ENCODE measurements at regions of chr7 and their contacts with region 1.

Region 1: DNA sequence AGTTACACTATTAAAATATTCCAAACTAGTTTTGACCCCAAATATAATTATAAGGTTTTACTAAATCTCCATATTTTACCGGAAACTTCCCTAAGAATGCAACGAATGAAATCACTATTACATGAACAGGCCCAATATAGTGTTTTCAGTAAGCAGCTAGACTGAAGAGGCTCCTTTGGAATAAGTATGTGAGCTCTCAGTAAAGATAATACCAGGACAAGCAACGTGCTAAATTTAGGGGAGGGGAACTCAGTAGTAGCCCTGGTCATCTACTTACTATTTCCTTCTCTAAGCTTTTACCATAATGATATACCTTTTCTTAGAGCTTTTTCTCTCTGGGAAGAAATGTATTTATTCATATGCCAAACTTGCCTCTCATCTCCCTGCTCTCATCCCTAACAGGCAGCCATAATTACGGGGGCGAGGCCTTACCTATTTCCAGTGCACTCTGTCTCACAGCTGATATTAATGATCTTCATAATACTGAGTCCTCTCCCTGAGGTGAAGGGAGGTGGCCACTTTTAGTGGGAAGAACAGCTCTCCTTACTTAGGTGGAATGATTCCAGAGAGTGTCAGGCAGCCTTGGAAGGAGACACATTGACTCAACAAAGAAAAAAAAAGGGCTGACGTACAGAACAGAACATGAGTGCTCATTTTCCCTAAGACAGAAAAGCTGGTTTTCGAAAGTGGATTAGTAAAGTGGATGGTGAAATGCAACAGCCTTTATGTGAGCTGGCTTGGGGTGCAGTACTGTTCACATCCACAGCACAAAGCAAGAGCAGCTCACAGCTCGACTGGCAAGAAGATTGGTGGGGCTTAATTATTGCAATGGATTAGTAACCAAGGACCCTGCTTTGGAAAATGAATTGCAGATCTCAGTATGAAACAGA is 165.4 kb downstream of the GLI3 start:
- DNase-seq: peak; percentile 68
- H3K4me3 ChIP-seq: no peak overlapping the region
- H3K27ac ChIP-seq: no peak overlapping the region
- H3K4me1 ChIP-seq: peaks cover 47% of the 10 kb centered on the region
- H3K27me3 ChIP-seq: no peaks in the 10 kb centered on the region
- CTCF ChIP-seq: peak; percentile 43; the same call in 1 of the 2 replicates

Region 2: DNA sequence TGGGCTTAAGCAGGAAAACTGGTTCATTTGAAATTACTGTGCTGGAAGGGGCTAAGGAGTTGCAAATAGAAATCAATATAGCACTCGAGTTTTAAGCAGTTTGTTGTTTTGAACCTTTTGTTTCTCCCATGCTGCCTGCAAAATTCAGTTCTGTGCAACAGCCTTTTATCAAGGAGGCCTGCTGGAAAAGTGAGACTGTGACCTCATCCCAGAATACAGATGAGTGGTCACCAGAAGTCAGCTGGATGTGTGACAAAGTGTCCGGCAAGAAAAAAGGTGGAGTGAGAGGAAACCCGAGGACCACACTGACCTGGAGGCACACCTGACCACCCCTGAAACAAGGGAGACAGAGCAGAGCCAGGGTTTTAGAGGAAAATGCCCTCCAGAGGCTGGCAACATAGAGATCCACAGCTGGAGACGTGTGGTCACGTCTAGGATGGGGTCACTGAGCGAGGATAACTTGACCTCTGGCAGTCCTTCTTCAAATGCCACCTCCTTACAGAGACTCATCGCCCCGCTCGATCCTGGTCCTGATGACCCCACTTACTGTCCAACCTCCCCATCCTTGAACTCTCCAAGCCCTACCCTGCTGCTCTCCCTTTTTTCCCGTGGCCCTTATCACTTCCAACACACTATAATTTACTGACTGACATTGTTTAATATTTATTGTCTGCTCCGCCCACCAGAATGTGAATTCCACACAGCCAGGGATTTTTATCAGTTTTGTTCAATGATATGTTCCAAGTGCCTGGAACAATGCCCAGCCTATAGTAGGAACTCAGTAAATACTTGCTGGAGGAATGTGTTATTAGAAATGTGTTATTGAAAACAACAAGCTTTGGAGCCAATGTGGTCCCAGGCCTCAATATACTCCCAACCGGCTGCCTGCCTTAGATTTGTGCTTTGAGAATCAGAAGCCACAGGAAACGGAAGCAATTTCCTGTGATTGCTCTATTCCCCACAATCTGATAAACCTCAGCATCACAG is 78.4 kb before region 1 on chr7:
- CTCF ChIA-PET with region 1: no interaction called
- POLR2A ChIA-PET with region 1: interaction called, 8 read pairs
- intact Hi-C with region 1: loop called (anchors 5 kb)
- DNase-seq: peak; percentile 96
- H3K4me3 ChIP-seq: no peak overlapping the region
- H3K27ac ChIP-seq: peak overlapping the region; percentile 88
- H3K4me1 ChIP-seq: peaks cover 99% of the 10 kb centered on the region
- H3K27me3 ChIP-seq: no peaks in the 10 kb centered on the region
- CTCF ChIP-seq: no peak

Measured in A673 (cell line).